Adrenal gland (tissue), 19 donors: ENCODE measurements at regions of chr1 and their contacts with region 1.

Region 1: DNA sequence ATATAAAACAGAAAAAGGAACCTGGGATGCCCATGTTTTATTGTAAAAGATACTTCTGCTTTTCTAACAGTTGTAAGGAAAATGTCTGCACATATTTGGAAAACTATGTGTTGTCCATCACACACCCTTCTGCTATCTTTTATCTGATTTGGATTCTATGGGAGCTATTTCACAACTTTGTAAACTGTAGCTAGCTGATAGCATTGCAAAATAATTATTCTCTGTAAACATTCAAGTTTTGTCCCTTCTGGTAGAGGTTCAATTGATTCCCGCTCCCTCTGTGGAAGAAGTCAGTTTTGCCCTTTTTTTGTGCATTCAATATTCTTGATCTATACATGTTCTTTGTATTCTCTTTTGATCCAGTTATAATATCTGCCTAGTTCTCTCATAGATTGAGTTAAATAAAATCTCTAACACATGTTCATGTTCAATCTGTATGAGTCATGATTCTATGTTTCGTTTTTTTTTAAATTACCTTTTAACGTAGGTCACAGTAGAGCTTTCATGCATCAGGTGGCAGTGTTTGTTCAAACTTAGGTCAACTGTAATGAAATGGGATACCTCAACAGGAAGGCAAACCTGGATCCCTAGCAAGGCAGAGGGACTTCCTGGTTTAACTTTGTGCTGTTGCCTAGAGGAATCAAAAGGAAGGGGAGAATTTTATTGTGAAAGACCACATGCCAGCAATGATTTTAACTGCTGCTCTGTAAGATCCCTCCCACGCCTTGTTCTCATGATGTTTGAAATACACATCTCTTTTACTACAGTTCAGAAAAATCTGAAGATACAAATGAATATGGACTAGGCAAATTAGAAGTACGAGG is 26.0 kb upstream of the BCL9 start:
- DNase-seq: peak in 1 of 7 donors; percentile 25
- H3K4me3 ChIP-seq: no peak overlapping the region
- H3K27ac ChIP-seq: no peak overlapping the region
- H3K4me1 ChIP-seq: peaks cover 12 to 19% of the 10 kb centered on the region in 2 donors
- H3K27me3 ChIP-seq: no peaks in the 10 kb centered on the region
- CTCF ChIP-seq: peak in 3 of 6 experiments; percentile 12 to 45 (median 28)
- POLR2A ChIP-seq: no peak

Region 2: GRCh38 chr1:147549526-147549925 is 34.3 kb after region 1 on chr1:
- intact Hi-C with region 1: loop called in 1 of 2 experiments (anchors 2 kb)
- DNase-seq: no peak
- H3K4me3 ChIP-seq: no peak overlapping the region
- H3K27ac ChIP-seq: no peak overlapping the region
- H3K4me1 ChIP-seq: peaks cover 17 to 46% of the 10 kb centered on the region in 2 donors
- H3K27me3 ChIP-seq: no peaks in the 10 kb centered on the region
- CTCF ChIP-seq: no peak
- POLR2A ChIP-seq: no peak

Region 3: DNA sequence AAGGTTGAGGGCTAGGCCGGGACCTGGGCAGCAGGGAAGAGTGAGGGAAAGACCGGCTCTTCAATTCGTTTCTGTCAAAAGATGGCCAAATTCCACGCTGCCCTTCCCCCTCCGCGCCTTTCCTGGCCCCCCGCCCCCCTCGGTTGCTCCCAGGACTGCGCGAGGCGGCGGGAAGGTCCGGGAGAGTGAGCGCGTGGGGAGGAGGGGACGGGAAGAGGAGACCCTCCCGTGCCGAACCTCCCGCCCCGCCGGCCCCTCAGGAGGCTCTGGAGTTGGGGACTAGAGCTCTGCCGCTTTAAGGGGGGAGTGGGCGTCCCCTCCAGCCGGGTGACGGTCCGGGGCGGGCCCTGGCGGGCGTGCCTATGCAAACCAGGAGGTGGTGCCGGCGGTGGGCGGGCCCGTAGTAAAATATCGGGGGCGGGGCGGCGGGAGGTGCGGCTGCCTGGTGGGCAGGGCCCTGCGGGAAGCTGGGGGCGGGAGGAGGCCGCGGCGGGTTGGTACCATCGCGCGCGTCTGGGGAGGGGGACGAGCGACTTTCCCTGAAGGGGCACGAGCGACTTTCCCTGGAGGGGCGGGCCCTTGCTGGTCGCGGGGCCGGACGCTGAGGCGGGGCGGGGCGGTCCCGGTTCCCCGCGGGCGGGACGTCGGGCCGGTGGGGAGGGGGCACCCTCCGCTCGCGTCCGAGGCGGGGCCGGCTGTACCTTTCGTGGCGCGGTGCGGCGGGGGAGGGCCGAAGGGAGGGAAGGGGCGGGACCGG is 84.3 kb after region 1 on chr1:
- intact Hi-C with region 1: no loop called
- DNase-seq: peak; percentile 98 to 99 (median 98)
- H3K4me3 ChIP-seq: peak overlapping the region; percentile 54 to 97 (median 76)
- H3K27ac ChIP-seq: peak overlapping the region; percentile 64 to 90 (median 82)
- H3K4me1 ChIP-seq: peaks cover 6 to 20% of the 10 kb centered on the region in 2 donors
- H3K27me3 ChIP-seq: no peaks in the 10 kb centered on the region
- CTCF ChIP-seq: peak in 1 of 6 experiments; percentile 11
- POLR2A ChIP-seq: peak; percentile 79 to 89